Activated CD4-positive, alpha-beta memory T cell treated with anti-CD3 and anti-CD28 coated beads, Interleukin-2, amount 10 ng/mL, durations not matched to agents 7 days and 5 days (primary cell): ENCODE measurements at regions of chr17 and their contacts with region 1.

Region 1: DNA sequence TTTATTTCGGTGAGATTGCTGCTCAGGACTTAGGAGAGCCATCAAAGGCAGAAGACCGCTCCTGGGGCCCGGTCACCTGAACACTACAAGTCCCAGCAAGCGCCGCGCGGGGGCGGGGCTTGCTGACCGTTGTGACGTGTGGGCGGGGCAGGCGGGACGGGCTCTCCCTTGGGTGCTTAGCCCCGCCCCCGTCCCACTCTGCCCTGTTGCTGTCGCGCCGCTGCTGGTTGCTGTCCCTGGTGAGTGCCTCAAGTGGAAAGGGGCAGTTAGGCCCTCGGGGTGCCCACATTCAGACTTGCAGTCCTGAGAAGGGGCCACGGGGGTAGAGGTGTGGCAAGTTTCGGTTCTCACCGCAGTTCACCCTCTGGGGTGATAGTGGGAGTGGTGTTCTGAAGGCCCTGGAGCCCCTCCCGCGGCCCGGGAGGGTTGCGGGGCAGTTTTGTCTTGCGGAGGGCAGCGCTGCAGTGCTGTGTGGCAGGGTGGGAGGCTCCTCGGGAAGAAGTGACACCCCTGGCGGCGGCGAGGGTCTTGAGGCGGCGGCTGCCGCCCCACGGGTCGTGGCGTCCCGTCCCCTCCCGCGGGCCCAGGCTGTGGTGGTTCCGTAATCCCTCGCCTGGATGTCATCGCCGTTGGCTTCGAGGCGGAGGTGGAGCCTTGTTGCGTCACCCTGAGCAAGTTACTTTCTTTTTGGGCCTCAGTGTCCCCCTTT is at the start of gene CALCOCO2:
- DNase-seq: peak; percentile 91
- H3K4me3 Mint-ChIP-seq: peak within 1 kb of the TSS; percentile 90
- H3K27ac Mint-ChIP-seq: peak within 1 kb of the TSS; percentile 97
- H3K4me1 Mint-ChIP-seq: peaks cover 56% of the 10 kb centered on the region
- H3K27me3 Mint-ChIP-seq: peaks cover 5% of the 10 kb centered on the region
- total RNA-seq, gene CALCOCO2: 162 to 176 TPM

Region 2: DNA sequence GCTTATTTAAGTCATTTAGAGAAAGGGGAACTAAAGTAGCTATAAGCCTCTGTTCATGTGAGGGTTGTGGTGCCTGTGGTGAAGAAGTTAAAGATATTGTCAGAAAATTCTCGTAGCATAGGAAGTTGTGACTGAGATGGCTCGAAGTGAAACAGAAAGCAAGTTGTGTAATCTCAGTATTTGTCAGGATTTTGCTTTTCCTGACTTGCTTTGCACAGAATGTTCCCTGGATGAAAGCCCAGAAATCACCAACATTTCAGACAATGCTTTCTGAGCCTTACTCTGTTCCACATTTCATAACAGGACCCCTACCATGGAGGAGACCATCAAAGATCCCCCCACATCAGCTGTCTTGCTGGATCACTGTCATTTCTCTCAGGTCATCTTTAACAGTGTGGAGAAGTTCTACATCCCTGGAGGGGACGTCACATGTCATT is 10.4 kb after region 1 on chr17:
- CTCF ChIA-PET with region 1: interaction called, 9 read pairs
- POLR2A ChIA-PET with region 1: interaction called, 17 read pairs
- DNase-seq: peak; percentile 61
- H3K4me3 Mint-ChIP-seq: peak overlapping the region; percentile 56
- H3K27ac Mint-ChIP-seq: peak overlapping the region; percentile 74
- H3K4me1 Mint-ChIP-seq: peaks cover 61% of the 10 kb centered on the region
- H3K27me3 Mint-ChIP-seq: no peaks in the 10 kb centered on the region